Panc1 (cell line): ENCODE measurements at regions of chr5 and their contacts with region 1.

Region 1: GRCh38 chr5:28766565-28767158 is 1728.3 kb upstream of the CDH9 start:
- DNase-seq: peak; percentile 27
- ATAC-seq: no peak
- H3K4me3 ChIP-seq: no peak overlapping the region
- H3K27ac ChIP-seq: no peak overlapping the region; the same call in 1 of the 2 replicates
- H3K4me1 ChIP-seq: no peaks in the 10 kb centered on the region
- H3K27me3 ChIP-seq: no peaks in the 10 kb centered on the region
- CTCF ChIP-seq: peak; percentile 15; the same call in 1 of the 2 replicates

Region 2: DNA sequence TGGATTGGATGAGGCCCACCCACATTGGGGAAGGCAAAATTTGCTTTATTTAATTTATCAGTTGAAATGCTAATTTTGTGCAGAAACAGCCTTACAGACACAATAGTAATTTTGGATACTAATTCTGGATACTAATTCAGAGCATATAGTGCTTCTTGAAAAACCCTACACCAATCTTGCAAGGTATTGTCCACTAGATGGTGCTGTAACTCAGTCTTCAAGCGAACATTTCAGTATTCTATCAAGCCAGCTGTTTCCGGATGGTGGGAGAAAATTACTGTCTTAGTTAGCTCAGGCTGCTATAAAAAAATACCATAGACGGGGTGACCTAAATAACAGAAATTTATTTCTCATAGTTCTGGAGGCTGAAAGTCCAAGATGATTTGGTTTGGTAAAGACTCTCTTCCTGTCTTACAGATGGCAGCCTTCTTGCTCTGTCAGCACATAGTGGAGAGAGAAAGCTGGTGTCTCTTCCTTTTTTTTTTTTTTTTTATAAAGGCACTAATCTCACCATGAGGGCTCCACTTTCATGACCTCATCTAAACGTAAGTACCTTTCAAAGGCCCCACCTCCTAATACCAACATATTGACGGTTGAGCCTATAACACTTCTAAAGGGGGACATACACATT is 421.7 kb before region 1 on chr5:
- CTCF ChIA-PET with region 1: no interaction called
- POLR2A ChIA-PET with region 1: no interaction called
- in situ Hi-C with region 1: no loop called
- intact Hi-C with region 1: loop called (anchors 5 kb)
- DNase-seq: peak; percentile 25
- ATAC-seq: no peak
- H3K4me3 ChIP-seq: no peak overlapping the region
- H3K27ac ChIP-seq: no peak overlapping the region
- H3K4me1 ChIP-seq: no peaks in the 10 kb centered on the region
- H3K27me3 ChIP-seq: no peaks in the 10 kb centered on the region
- CTCF ChIP-seq: peak; percentile 52; the same call in 1 of the 2 replicates

Region 3: GRCh38 chr5:28473531-28474107 is 293.0 kb before region 1 on chr5:
- CTCF ChIA-PET with region 1: no interaction called
- POLR2A ChIA-PET with region 1: no interaction called
- in situ Hi-C with region 1: no loop called
- intact Hi-C with region 1: loop called (anchors 5 kb)
- DNase-seq: peak; percentile 12
- ATAC-seq: no peak
- H3K4me3 ChIP-seq: no peak overlapping the region
- H3K27ac ChIP-seq: no peak overlapping the region
- H3K4me1 ChIP-seq: no peaks in the 10 kb centered on the region
- H3K27me3 ChIP-seq: no peaks in the 10 kb centered on the region
- CTCF ChIP-seq: peak; percentile 25; the same call in 1 of the 2 replicates

Region 4: DNA sequence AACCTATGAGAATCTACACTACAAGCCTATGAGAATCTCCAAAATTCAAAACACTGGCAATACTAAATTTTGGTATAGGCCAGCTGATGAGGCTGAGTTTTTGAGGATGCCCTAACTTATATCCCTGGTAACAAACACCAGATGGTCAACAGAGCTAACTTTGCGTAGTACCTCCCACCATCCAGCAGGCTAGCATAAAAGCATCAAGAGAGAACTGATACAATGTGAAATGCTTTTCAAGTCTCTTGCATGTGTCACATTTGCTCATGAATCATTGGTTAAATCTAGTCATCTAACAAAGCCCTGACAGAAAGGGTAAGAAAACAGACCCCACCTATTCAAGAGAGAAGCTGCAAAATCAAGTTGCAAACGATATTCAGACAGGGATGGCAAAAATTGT is 118.6 kb before region 1 on chr5:
- CTCF ChIA-PET with region 1: no interaction called
- POLR2A ChIA-PET with region 1: no interaction called
- in situ Hi-C with region 1: no loop called
- intact Hi-C with region 1: no loop called
- DNase-seq: no peak
- ATAC-seq: no peak
- H3K4me3 ChIP-seq: no peak overlapping the region
- H3K27ac ChIP-seq: no peak overlapping the region
- H3K4me1 ChIP-seq: no peaks in the 10 kb centered on the region
- H3K27me3 ChIP-seq: no peaks in the 10 kb centered on the region
- CTCF ChIP-seq: no peak

Region 5: GRCh38 chr5:29508131-29508530 is 741.5 kb after region 1 on chr5:
- CTCF ChIA-PET with region 1: no interaction called
- POLR2A ChIA-PET with region 1: no interaction called
- in situ Hi-C with region 1: no loop called
- intact Hi-C with region 1: no loop called
- DNase-seq: no peak
- ATAC-seq: no peak
- H3K4me3 ChIP-seq: no peak overlapping the region
- H3K27ac ChIP-seq: no peak overlapping the region
- H3K4me1 ChIP-seq: no peaks in the 10 kb centered on the region
- H3K27me3 ChIP-seq: no peaks in the 10 kb centered on the region
- CTCF ChIP-seq: no peak